Activated B cell treated with CpG ODN at 0.5 μM for 24 hours (primary cell): ENCODE measurements at regions of chr3 and their contacts with region 1.

Region 1: DNA sequence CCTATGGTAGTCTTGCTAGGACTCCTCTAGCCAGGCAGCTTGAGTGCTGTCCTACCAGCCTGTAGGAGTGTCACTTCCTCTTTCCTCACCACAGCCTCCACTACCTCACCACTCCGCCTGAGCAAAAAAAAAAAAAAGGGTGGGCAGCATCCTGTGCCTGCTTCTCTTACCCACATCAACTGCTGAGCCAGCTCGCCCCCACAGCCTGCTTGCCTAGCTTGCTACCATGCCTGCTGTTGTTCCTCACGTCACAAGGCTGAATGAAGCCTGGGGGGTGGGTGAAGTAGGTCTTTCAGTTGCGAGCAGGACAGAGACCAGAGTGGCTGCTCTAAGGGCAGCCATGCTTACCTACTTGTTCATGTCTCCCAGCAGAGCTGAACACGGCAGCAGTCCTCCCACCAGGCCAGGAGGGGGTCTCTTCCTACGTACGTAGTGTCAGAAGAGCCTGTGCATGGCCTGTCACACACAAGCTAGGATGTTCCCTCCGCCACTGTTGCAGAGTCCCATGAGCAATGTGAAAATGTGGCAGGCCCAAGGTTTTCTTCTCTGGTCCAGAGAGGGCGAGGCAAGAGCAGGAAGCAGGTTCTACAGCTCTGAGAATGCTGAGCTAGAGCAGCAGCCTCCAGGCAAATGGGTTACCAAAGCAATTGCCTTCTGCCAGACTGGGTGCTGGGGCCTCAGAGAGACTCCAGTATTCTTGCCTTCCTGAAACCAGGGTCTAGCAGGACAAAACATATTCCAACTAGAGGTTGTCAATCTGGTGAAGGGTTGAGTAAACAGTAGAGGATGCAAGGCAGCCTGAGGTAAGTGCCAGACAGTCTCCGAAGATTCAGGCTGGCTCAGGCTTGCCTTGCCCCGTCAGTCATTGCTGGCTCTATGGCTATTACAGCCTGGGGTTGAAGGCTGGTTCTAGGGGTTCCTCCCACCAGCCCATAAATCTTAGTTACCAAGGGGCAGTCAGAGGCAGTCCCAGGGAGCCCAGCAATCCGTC is 8.1 kb downstream of the PPM1M start:
- DNase-seq: peak; percentile 58
- ATAC-seq: peak; percentile 96
- H3K4me3 Mint-ChIP-seq: peak overlapping the region; percentile 76
- H3K27ac Mint-ChIP-seq: peak overlapping the region; percentile 97
- H3K4me1 Mint-ChIP-seq: peaks cover 42% of the 10 kb centered on the region
- H3K27me3 Mint-ChIP-seq: no peaks in the 10 kb centered on the region
- CTCF ChIP-seq: no peak

Region 2: GRCh38 chr3:52190294-52191074 is 63.1 kb before region 1 on chr3:
- CTCF ChIA-PET with region 1: no interaction called
- POLR2A ChIA-PET with region 1: no interaction called
- intact Hi-C with region 1: no loop called
- DNase-seq: no peak
- ATAC-seq: no peak
- H3K4me3 Mint-ChIP-seq: no peak overlapping the region
- H3K27ac Mint-ChIP-seq: no peak overlapping the region
- H3K4me1 Mint-ChIP-seq: peaks cover 4% of the 10 kb centered on the region
- H3K27me3 Mint-ChIP-seq: no peaks in the 10 kb centered on the region
- CTCF ChIP-seq: no peak

Region 3: DNA sequence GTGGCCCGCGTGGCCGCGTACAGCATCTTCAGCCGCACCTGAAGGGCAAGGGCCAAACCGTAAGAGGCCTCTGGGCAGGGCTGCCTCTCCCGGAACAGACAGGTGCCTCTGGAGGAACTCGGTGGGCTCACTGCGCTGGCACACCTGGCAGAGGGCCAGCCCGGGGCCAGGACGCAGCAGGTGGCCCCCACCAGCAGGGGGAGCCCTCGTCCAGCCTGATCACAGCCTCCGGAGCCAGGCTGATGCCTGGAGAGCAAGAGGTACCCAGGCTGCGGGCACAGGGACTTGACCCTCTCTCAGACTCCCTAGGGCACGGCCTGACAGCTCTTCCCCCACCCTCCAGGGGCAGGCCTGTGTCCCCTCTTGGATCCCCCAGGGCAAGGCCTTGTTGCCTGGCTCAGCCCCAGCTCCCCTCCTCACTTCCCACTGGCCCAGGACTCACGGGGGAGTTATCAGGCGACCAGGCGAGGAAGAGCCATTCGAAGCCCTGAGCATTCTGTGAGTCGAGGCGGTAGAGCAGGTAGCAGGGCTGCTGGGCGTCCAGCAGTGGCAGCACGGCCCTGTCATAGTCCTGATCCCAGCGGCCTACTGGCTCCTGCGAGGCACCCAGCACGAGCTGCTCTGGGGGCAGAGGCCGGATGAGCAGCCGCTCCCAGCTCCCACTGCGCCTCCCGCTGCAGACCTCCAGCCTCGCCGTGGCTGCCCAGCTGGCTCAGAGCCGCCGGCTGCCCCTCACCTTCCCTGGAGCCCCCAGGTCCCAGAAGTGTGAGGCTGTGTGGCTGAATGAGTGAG is 21.9 kb before region 1 on chr3:
- CTCF ChIA-PET with region 1: interaction called, 32 read pairs
- POLR2A ChIA-PET with region 1: interaction called, 7 read pairs
- intact Hi-C with region 1: loop called (anchors 1 kb)
- DNase-seq: peak; percentile 89
- ATAC-seq: peak; percentile 90
- H3K4me3 Mint-ChIP-seq: no peak overlapping the region
- H3K27ac Mint-ChIP-seq: no peak overlapping the region
- H3K4me1 Mint-ChIP-seq: peaks cover 50% of the 10 kb centered on the region
- H3K27me3 Mint-ChIP-seq: no peaks in the 10 kb centered on the region
- CTCF ChIP-seq: peak; percentile 41

Region 4: DNA sequence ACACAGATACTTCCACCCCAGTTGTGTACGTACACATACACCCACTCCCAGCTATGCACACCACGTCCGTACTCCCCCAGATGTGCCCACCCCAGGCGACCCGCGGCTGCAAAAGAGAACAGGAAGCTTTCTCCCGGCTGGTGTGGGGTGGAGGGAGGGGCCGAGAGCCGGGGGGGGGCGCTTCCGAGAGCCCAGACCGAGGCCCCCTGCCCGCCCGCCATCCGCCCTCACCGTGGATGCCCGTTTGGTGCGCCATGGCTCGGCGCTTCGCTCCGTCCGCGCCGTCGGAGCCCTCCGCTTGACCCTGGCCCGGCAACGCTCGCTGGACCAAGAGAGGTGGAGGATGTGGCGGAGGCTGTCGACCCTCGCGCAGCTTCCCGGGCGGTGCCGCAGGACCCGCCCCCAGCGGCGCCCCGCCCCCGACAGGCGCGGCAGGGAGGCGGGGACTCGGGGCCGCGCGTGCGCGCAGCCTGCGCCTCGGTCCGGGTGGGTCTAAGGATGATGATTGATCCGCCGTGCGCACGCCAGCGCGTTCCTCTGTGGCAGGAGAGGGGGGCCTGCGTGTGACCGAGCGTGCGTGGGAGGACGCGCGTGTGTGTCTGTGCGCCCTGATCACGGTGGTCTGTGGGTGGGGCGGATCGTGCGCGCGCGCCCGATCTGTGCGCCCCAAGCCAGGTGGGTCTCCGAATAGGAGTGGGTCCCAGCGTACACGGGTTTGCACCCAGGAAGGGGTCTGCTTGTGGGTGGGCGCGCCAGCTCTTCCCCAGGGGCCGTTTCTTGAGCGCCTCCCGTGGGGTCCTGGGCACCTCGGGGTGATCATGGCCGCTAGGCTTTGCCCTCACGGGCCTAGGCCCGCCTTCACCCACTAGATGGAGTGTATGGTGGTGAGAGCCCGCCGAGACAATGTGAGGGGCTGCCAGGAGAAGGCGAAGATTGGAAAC is 14.6 kb before region 1 on chr3 and contains the start of gene TWF2:
- CTCF ChIA-PET with region 1: interaction called, 8 read pairs
- POLR2A ChIA-PET with region 1: interaction called, 51 read pairs
- intact Hi-C with region 1: loop called (anchors 1 kb)
- DNase-seq: peak; percentile 94
- ATAC-seq: peak; percentile 86
- H3K4me3 Mint-ChIP-seq: peak within 1 kb of the TSS; percentile 96
- H3K27ac Mint-ChIP-seq: peak within 1 kb of the TSS; percentile 93
- H3K4me1 Mint-ChIP-seq: peaks cover 72% of the 10 kb centered on the region
- H3K27me3 Mint-ChIP-seq: no peaks in the 10 kb centered on the region
- CTCF ChIP-seq: no peak
- total RNA-seq, gene TWF2: 74.1 and 76.7 TPM in 2 replicates

Region 5: GRCh38 chr3:52270252-52270754 is 16.7 kb after region 1 on chr3:
- CTCF ChIA-PET with region 1: no interaction called
- POLR2A ChIA-PET with region 1: interaction called, 5 read pairs
- intact Hi-C with region 1: loop called (anchors 1 kb)
- DNase-seq: no peak
- ATAC-seq: no peak
- H3K4me3 Mint-ChIP-seq: peak overlapping the region; percentile 41
- H3K27ac Mint-ChIP-seq: peak overlapping the region; percentile 76
- H3K4me1 Mint-ChIP-seq: peaks cover 79% of the 10 kb centered on the region
- H3K27me3 Mint-ChIP-seq: no peaks in the 10 kb centered on the region
- CTCF ChIP-seq: no peak

Region 6: DNA sequence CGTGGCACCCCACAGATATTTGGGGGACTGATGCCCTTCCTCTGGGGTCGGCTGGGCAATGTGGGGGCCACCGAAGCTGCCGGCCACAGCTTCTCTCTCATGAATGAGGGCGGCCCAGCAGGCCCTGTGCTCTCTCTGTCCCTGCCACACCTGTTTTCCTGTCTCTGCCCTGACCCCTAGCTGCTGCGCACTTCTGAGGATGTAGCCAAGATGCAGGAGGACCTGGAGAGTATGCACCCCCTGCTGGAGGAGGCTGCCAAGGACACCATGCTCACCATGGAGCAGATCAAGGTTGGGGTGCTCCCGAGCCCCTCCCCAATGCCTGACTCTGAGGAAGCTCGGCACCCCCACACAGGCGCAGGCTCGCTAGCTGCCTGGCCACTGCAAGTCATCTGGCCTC is 131.5 kb after region 1 on chr3:
- CTCF ChIA-PET with region 1: no interaction called
- POLR2A ChIA-PET with region 1: no interaction called
- intact Hi-C with region 1: no loop called
- DNase-seq: no peak
- ATAC-seq: peak; percentile 49
- H3K4me3 Mint-ChIP-seq: no peak overlapping the region
- H3K27ac Mint-ChIP-seq: no peak overlapping the region
- H3K4me1 Mint-ChIP-seq: no peaks in the 10 kb centered on the region
- H3K27me3 Mint-ChIP-seq: no peaks in the 10 kb centered on the region
- CTCF ChIP-seq: no peak